ENCODE measurements at regions of chr2 and their contacts with region 1.

Region 1: DNA sequence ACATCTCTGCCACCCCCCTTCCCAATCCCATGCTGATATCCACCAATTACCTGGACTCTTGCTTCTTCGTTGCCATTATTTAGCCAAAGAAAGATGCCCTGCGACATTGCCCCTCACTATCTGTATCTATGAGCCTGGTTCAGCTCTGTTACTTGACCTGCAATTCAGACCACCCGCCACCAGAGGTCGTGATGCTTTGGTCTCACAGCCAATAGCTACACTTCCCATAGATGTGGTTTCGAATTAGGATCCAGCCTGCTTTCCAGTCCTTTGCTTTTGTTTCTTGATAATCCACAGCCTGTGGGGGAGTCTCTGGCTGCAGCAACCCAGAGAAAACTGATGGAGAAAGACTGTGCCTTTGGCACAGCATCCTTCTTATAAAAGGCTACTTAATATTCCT is 239.4 kb downstream of the KLHL29 start:
- DNase-seq: no peak
- H3K4me3 ChIP-seq: no peak overlapping the region
- H3K27ac ChIP-seq: peak overlapping the region; percentile 17 to 95 (median 69)
- H3K4me1 ChIP-seq: peaks cover 15 to 72% (median 51%) of the 10 kb centered on the region in 4 donors
- H3K27me3 ChIP-seq: no peaks in the 10 kb centered on the region
- CTCF ChIP-seq: peak in 2 of 3 experiments; percentile 9 to 48
- EP300 ChIP-seq: no peak
- POLR2A ChIP-seq: no peak

Region 2: DNA sequence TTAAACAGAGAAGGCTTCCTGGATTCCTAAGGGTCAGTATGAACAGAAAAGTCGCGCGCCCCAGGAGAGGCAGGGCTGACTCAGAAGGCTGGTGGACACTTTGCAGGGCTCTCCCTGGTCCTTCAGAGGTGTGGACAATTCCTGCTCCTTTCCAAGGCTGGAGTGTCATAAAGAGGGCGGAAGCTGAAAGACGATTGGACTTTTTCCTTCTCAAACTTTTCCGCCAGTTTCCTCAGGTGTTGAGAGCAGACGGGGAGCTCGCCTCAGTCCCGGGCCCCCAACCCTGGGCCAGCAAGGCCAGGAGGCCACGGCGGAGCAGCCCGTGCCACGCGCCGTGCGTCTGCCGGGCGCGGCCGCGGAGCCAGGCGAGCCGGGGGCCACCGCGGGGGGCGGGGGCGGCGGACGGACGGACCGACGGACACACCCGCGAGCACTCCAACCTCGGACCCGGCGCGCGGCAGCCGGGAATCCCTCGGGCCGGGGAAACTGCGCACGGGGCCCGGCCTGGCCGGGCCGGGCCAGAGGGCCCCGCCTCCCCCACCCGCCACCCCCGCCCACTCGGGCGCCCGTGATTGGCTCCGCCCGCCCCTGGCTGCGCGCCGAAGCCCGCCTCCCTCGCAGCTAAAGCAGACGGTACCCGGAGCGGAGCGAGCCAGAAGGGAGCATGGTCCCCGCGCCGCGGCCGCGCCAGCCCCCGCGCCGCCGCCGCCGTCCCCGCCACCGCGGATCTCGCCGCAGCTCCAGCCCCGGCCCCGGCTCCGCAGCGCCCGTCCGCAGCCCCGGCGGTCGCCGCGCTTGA is 239.6 kb before region 1 on chr2 and contains the start of gene KLHL29:
- intact Hi-C with region 1: loop called (anchors 5 kb)
- DNase-seq: peak; percentile 95
- H3K4me3 ChIP-seq: peak within 1 kb of the TSS; percentile 89 to 96 (median 92)
- H3K27ac ChIP-seq: peak within 1 kb of the TSS; percentile 94 to 97 (median 95)
- H3K4me1 ChIP-seq: peaks cover 16 to 44% (median 40%) of the 10 kb centered on the region in 4 donors
- H3K27me3 ChIP-seq: peaks cover 0 to 11% (median 0%) of the 10 kb centered on the region in 4 donors
- CTCF ChIP-seq: no peak
- EP300 ChIP-seq: no peak
- POLR2A ChIP-seq: no peak
- total RNA-seq, gene KLHL29: 22.0 to 26.1 (median 23.4) TPM

Region 3: DNA sequence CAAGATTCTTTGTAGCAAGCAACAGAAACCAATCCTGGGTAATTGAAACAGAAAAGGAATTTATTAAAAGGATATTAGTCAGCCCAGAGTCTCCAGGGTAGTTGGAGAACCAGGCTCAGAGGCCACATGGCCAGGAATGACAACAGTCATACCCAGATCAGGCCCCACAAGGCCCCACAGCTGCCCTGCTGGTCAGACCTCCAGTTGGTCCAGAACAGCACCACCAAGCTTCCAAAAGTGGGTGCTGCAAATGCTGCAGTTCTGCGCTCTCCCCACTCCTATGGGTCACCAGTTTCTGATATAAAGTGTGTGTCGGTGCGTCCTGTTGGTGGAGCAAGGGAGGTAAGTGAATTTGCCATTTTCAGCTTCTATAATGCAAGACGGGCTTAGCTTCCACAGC is 209.5 kb before region 1 on chr2:
- intact Hi-C with region 1: loop called (anchors 10 kb)
- DNase-seq: no peak
- H3K4me3 ChIP-seq: no peak overlapping the region
- H3K27ac ChIP-seq: no peak overlapping the region
- H3K4me1 ChIP-seq: peaks cover 3 to 86% (median 56%) of the 10 kb centered on the region in 4 donors
- H3K27me3 ChIP-seq: no peaks in the 10 kb centered on the region
- CTCF ChIP-seq: peak in 1 of 3 experiments; percentile 6
- EP300 ChIP-seq: no peak
- POLR2A ChIP-seq: no peak

Region 4: GRCh38 chr2:23595601-23596251 is 28.7 kb before region 1 on chr2:
- intact Hi-C with region 1: no loop called
- DNase-seq: no peak
- H3K4me3 ChIP-seq: peak overlapping the region in 1 of 4 donors; percentile 25
- H3K27ac ChIP-seq: peak overlapping the region; percentile 87 to 99 (median 91)
- H3K4me1 ChIP-seq: peaks cover 36 to 97% (median 95%) of the 10 kb centered on the region in 4 donors
- H3K27me3 ChIP-seq: no peaks in the 10 kb centered on the region
- CTCF ChIP-seq: peak in 1 of 3 experiments; percentile 14
- EP300 ChIP-seq: peak; percentile 56
- POLR2A ChIP-seq: no peak

Measured in esophagus muscularis mucosa (tissue), 4 donors.